CD4-positive, alpha-beta T cell (primary cell): ENCODE measurements at regions of chr10 and their contacts with region 1.

Region 1: DNA sequence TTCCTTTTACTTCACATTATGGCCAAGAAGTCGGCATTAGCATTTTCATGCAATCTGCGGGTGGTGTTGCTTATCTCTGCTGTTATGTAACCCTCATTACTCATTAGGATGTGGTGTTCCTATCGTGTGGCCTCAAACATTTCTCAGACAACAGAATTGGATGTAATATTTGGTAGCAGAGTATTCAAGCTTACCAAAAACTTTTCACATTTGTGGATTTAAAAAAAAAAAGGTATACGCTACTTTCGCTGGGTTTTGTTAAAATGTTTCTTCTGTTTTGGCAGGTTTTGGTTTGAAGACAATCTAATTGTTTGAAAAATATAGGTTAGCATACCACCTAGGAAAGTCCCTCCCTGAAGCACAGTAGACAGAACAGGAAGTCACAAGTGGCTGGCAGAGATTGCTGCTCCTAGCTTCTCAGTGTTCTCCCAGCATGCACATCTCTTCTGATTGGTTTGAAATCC is 128.8 kb downstream of the GATA3 start:
- DNase-seq: peak in 12 of 14 experiments; percentile 8 to 90 (median 26)
- ATAC-seq: peak; percentile 92
- H3K4me3 ChIP-seq: peak overlapping the region; percentile 6
- H3K4me3 Mint-ChIP-seq: peak overlapping the region; percentile 72
- H3K27ac ChIP-seq: peak overlapping the region; percentile 29 to 78
- H3K27ac Mint-ChIP-seq: peak overlapping the region; percentile 94
- H3K4me1 ChIP-seq: peaks cover 23% of the 10 kb centered on the region
- H3K4me1 Mint-ChIP-seq: peaks cover 48% of the 10 kb centered on the region
- H3K27me3 ChIP-seq: no peaks in the 10 kb centered on the region
- H3K27me3 Mint-ChIP-seq: no peaks in the 10 kb centered on the region
- CTCF ChIP-seq: no peak

Region 2: GRCh38 chr10:8138471-8138870 is 44.8 kb before region 1 on chr10:
- CTCF ChIA-PET with region 1: no interaction called
- POLR2A ChIA-PET with region 1: no interaction called
- intact Hi-C with region 1: loop called in 1 of 2 experiments (anchors 5 kb)
- DNase-seq: no peak
- ATAC-seq: no peak
- H3K4me3 ChIP-seq: no peak overlapping the region
- H3K4me3 Mint-ChIP-seq: peak overlapping the region; percentile 88
- H3K27ac ChIP-seq: no peak overlapping the region
- H3K27ac Mint-ChIP-seq: peak overlapping the region; percentile 90
- H3K4me1 ChIP-seq: peaks cover 23% of the 10 kb centered on the region
- H3K4me1 Mint-ChIP-seq: peaks cover 30% of the 10 kb centered on the region
- H3K27me3 ChIP-seq: no peaks in the 10 kb centered on the region
- H3K27me3 Mint-ChIP-seq: no peaks in the 10 kb centered on the region
- CTCF ChIP-seq: no peak

Region 3: DNA sequence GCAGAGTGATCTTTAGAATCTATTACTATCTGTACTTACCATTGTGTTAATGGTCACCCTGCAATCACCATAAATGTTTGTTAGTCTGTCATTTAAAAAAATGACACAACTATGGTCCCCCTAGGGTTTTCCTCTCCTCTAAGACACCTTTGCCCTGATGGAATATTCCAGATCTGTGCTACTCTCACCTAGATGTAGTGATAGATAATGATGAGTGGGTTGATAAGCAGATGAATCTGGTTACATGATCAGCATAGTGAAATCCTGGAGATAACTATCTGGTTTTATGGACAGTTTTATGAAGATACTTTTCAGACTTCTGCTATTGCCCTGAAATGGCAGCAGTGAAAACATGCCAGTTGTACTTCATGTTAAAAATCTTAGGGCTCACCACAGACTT is 23.6 kb after region 1 on chr10:
- CTCF ChIA-PET with region 1: no interaction called
- POLR2A ChIA-PET with region 1: no interaction called
- intact Hi-C with region 1: no loop called
- DNase-seq: no peak
- ATAC-seq: no peak
- H3K4me3 ChIP-seq: no peak overlapping the region
- H3K4me3 Mint-ChIP-seq: no peak overlapping the region
- H3K27ac ChIP-seq: no peak overlapping the region
- H3K27ac Mint-ChIP-seq: no peak overlapping the region
- H3K4me1 ChIP-seq: no peaks in the 10 kb centered on the region
- H3K4me1 Mint-ChIP-seq: no peaks in the 10 kb centered on the region
- H3K27me3 ChIP-seq: no peaks in the 10 kb centered on the region
- H3K27me3 Mint-ChIP-seq: no peaks in the 10 kb centered on the region
- CTCF ChIP-seq: no peak

Region 4: DNA sequence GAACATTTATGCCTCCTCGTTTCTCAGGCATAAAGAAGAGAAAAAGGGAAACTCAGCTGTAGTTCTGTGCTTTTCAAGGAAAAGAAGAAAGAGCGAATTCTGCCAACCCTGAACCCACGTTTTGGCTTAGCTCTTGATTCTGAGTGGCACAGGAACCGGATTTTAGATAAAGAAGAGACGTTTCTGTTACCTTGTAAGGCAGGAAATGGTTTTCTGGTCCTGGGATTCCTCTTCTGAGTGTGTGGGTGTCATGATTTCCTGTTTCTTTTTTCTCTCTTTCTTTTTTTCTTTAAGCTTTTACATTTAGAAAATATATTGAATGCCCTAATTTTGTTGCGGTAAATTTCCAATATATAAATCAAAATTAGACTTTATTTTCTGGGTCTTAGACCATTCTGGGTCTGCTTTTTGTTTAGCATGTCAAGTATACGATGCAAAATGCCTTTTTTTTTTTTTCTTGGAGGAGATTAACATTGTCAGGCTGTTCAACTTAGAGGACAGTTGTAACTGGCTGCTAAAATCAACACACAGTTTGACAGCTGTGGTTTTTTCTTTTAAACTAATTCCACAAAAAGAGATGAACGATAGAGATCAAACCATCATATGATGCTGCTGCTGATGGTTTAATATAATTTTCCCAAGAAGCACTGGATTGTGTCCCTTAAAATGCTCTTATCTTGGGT is 62.0 kb after region 1 on chr10:
- CTCF ChIA-PET with region 1: no interaction called
- POLR2A ChIA-PET with region 1: interaction called, 6 read pairs
- intact Hi-C with region 1: loop called in 1 of 2 experiments (anchors 2 kb)
- DNase-seq: peak in 4 of 14 experiments; percentile 37 to 81 (median 69)
- ATAC-seq: peak; percentile 90
- H3K4me3 ChIP-seq: peak overlapping the region; percentile 1
- H3K4me3 Mint-ChIP-seq: peak overlapping the region; percentile 79
- H3K27ac ChIP-seq: peak overlapping the region; percentile 32 to 72
- H3K27ac Mint-ChIP-seq: peak overlapping the region; percentile 92
- H3K4me1 ChIP-seq: peaks cover 44% of the 10 kb centered on the region
- H3K4me1 Mint-ChIP-seq: peaks cover 77% of the 10 kb centered on the region
- H3K27me3 ChIP-seq: no peaks in the 10 kb centered on the region
- H3K27me3 Mint-ChIP-seq: no peaks in the 10 kb centered on the region
- CTCF ChIP-seq: no peak